RWPE1 (cell line): ENCODE measurements at regions of chr11 and their contacts with region 1.

Region 1: GRCh38 chr11:70191495-70192140 is 11.5 kb upstream of the FADD start:
- DNase-seq: peak; percentile 51
- H3K27ac ChIP-seq: no peak overlapping the region
- CTCF ChIP-seq: peak; percentile 84

Region 2: DNA sequence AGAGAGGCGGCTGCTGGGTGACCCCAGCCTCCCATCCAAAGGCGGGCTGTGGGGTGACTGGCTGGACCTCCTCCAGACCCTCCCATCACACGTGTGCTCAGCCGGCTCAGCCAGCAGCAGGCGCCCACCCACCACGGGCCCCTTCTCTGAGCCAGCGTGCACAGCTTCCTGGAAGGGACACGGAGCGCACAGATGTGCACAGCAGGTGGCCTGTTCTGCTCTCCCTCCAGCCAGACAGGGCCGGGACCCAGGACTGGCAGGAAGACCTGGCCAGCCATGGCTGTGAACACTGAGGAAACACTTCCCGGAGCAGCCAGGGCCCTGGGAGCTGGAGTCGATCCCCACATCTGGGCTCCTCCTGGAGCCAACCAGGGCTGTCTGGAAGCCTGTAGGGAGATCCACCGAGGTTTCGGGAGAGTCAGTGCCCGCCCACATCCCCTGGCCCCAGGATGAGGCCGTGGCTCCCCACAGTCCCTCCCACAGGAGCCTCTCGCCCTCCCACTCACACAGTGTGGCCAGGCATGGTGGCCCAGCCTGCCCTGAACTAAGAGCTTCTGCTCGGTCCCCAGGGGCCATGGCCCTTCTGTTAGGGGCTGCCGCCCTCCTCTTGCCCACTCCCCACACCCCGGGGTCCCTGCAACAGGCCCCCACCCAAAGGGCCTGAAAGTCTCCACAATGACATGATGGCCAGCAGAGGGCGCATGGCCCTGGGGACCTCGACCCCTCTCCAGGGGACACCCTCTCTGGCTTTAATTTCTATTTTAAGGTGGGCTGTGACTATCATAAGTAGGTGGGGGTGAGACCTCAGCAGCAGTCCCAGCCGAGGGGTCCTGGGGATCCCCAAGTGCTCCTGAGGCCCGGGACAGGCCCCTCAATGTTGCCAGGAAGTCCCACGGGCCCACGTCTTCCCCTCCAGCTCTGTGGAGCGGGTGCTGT is 281.8 kb before region 1 on chr11:
- CTCF ChIA-PET with region 1: interaction called, 19 read pairs
- POLR2A ChIA-PET with region 1: no interaction called
- DNase-seq: no peak
- H3K27ac ChIP-seq: no peak overlapping the region
- CTCF ChIP-seq: peak; percentile 75

Region 3: DNA sequence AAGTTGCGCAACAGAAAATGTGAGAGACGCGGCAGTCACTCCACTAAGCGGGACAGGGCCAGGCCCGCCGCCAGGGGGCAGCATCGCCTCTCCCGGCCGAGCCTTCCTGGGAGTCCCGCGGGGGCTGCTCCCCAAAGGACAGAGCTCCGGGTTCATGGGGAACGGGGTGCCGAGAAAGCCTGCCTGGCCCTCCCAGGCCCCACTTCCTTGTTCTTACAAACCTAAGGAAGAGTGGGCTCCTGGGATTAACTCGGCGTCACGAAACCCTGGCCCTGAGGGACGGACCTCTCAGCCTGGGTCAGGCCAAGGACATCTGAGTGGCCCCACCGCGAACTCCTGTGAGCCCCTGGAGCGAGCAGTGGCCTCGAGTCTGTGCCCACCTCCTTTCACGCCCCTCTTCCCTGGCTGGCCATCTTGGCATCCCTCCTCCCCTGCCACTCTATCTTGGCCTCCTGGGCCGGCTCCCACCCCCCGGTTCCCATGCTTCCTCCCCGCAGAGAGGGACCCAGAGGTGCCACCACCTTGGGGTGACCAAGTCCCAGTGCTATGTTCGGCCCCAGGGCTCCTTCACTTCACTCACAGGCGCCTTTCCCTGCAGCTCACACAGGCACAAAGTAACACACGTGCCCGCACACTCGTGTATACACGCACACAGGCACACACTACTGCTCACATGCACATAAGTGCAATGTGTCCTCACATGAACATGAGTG is 272.5 kb before region 1 on chr11:
- CTCF ChIA-PET with region 1: interaction called, 22 read pairs
- POLR2A ChIA-PET with region 1: no interaction called
- DNase-seq: peak; percentile 64
- H3K27ac ChIP-seq: no peak overlapping the region
- CTCF ChIP-seq: peak; percentile 83

Region 4: DNA sequence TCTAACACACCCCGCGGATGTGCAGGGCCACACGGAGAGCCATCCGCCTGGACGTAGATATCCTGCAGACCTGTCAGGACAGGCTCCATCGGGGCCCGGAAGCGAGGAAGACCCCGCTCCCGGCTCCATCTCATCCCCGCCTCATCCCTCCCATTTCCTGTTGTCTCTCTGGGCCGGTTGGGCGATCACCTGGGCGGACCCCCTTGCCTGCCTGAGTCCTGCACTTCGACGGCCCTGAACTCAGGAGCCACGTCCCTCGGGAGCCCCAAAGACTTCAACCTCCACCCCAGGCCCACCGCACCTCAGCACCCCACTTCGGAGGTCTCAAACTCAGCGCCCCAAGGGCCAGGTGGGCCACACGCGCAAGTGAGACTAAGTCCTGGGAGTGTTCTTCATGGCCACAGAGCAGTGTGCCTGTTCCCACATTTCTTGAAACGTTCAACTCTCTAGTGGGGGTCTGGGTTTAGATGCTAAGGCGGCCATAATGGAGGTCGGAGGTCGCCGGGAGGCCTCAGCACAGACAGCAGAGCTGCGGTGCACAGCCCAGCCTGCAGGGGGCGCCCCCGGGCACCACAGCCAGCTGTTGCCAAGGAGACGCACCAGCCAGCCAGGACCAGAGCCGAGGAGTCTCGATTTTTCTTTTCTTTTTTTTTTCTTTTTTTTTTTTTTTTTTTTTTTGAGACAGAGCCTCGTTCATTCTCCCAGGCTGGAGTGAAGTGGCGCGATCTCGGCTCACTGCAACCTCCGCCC is 14.5 kb before region 1 on chr11:
- CTCF ChIA-PET with region 1: interaction called, 10 read pairs
- POLR2A ChIA-PET with region 1: no interaction called
- DNase-seq: peak; percentile 55
- H3K27ac ChIP-seq: no peak overlapping the region
- CTCF ChIP-seq: peak; percentile 43